ENCODE measurements at regions of chr10 and their contacts with region 1.

Region 1: DNA sequence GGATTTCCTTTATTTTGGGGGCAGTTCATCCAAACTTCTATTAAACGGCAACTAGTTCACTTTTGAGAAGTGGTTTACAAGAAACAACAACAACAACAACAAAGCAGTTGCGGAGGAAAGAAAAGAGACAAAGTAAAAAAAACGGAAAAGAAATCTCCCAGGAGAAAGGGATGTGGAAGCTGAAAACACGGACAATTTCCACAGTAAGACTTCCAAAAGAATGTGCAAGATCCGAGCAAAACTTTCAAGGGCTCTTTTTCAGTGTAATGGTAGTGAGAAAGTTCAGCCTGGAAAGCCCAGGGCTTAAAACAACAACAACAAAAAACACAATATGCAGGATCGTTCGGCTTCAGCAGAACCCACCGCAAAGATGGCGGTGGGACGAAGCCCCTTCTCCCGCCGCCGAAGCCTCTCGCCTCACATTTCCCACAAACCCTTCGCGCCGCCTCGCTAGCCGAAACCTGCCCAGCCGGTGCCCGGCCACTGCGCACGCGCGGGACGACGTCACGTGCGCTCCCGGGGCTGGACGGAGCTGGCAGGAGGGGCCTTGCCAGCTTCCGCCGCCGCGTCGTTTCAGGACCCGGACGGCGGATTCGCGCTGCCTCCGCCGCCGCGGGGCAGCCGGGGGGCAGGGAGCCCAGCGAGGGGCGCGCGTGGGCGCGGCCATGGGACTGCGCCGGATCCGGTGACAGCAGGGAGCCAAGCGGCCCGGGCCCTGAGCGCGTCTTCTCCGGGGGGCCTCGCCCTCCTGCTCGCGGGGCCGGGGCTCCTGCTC is at the start of gene TNKS2:
- DNase-seq: peak; percentile 94
- H3K4me3 ChIP-seq: peak within 1 kb of the TSS; percentile 47 to 77 (median 74)
- H3K27ac ChIP-seq: peak within 1 kb of the TSS; percentile 78
- H3K4me1 ChIP-seq: peaks cover 12% of the 10 kb centered on the region
- H3K27me3 ChIP-seq: no peaks in the 10 kb centered on the region
- CTCF ChIP-seq: no peak
- total RNA-seq, gene TNKS2: 35.8 to 48.7 TPM

Region 2: DNA sequence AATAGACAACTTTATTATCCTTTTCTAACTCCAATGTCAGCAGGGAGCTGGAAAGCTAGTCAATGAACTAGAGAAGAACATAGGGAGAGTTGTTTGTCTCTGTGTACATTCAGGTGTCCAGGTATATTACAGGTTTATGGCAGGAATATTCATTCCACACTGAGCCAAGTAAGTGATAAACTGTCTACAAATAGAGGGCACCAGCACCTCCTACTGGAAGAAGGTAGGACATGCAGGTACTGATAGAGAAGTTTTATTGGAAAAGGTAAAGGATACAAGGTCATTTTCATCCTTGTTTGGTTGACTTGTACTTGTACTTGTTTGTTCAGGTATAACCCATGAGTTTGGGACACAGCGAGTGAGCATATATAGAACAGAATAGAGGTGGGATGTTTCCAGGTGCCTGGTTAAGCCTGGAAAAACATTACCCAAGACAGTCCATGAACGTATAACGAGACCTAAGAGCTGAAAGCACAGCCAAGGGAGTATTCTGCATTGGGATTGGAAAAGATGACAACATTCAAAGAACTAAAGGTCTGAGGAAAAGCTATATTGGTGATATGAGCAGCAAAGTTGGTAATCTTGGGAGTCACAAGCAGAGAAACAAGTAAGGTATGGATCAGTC is 103.8 kb before region 1 on chr10:
- CTCF ChIA-PET with region 1: no interaction called
- dilution Hi-C with region 1: no loop called
- in situ Hi-C with region 1: no loop called
- intact Hi-C with region 1: no loop called
- DNase-seq: peak; percentile 48
- H3K4me3 ChIP-seq: no peak overlapping the region
- H3K27ac ChIP-seq: no peak overlapping the region
- H3K4me1 ChIP-seq: peaks cover 23% of the 10 kb centered on the region
- H3K27me3 ChIP-seq: no peaks in the 10 kb centered on the region
- CTCF ChIP-seq: peak; percentile 89 to 95

Region 3: GRCh38 chr10:91758303-91759146 is 39.5 kb before region 1 on chr10:
- CTCF ChIA-PET with region 1: interaction called, 4 read pairs
- dilution Hi-C with region 1: no loop called
- in situ Hi-C with region 1: no loop called
- intact Hi-C with region 1: loop called (anchors 2 kb)
- DNase-seq: peak; percentile 48
- H3K4me3 ChIP-seq: no peak overlapping the region
- H3K27ac ChIP-seq: no peak overlapping the region
- H3K4me1 ChIP-seq: no peaks in the 10 kb centered on the region
- H3K27me3 ChIP-seq: peaks cover 3% of the 10 kb centered on the region
- CTCF ChIP-seq: peak; percentile 68 to 70

Region 4: DNA sequence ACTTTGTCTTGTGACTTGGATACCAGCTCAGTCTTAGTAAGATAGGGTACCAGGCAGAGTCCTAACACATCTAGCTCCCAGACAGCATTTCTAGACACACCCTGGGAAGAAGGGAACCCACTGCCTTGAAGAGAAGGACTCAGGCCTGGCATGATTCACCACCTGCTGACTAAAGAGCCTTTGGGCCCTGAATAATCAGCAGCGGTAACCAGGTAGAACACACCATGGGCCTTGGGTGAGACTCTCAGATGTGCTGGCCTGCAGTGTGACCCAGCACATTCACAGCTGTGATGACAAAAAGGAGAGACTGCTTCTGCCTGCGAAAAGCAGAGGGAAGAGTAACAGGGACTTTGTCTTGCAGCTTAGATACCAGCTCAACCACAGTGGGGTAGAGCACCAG is 10.3 kb before region 1 on chr10:
- CTCF ChIA-PET with region 1: no interaction called
- dilution Hi-C with region 1: no loop called
- in situ Hi-C with region 1: no loop called
- intact Hi-C with region 1: loop called (anchors 1 kb)
- DNase-seq: peak; percentile 92
- H3K4me3 ChIP-seq: no peak overlapping the region
- H3K27ac ChIP-seq: peak overlapping the region; percentile 64
- H3K4me1 ChIP-seq: peaks cover 18% of the 10 kb centered on the region
- H3K27me3 ChIP-seq: no peaks in the 10 kb centered on the region
- CTCF ChIP-seq: no peak

Region 5: DNA sequence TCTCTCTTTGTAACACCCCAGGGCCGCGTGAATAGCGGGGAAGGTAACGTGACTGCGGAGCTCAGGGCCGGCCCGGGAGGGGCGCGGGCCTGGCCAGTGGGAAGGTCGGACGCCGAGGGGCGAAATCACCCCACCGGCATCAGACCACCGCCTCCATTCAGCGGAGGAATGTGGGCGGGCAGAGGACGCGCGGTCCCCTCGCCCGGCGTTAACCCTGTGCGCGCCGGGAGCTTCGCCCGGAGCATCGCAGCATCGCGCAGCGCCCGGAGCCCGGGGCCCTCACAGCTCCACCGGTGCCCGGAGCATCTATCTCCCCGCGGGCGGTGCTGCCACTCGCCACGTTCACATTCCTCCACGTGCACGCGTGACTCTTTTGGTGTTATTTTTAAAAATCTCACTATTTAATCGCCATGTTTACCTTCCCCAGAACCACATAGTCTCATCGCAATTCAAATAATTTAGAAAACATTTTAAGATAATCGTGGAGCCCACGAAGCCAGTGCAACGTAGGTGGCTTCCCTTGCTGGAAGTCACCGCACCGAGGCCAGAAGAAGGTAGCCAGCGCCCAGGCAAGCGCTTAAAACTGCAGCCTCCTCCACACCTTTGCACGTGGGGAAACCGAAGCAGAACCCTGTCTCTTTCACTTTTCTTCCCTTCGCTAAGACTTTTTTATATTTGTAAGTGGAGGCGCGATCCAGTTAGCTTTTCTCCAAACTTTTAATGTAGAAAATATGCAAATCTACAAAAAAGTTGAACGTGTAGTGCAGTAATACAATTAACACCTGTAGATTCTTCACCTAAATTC is 89.4 kb after region 1 on chr10:
- CTCF ChIA-PET with region 1: no interaction called
- dilution Hi-C with region 1: no loop called
- in situ Hi-C with region 1: no loop called
- intact Hi-C with region 1: no loop called
- DNase-seq: no peak
- H3K4me3 ChIP-seq: peak overlapping the region; percentile 40 to 46 (median 44)
- H3K27ac ChIP-seq: no peak overlapping the region
- H3K4me1 ChIP-seq: peaks cover 13% of the 10 kb centered on the region
- H3K27me3 ChIP-seq: no peaks in the 10 kb centered on the region
- CTCF ChIP-seq: no peak

Measured in mammary epithelial cell (primary cell).